Activated CD4-positive, alpha-beta T cell treated with anti-CD3 and anti-CD28 coated beads, Interleukin-2, amount 10 ng/mL, durations not matched to agents 24 days and 14 days (primary cell): ENCODE measurements at regions of chr21 and their contacts with region 1.

Region 1: DNA sequence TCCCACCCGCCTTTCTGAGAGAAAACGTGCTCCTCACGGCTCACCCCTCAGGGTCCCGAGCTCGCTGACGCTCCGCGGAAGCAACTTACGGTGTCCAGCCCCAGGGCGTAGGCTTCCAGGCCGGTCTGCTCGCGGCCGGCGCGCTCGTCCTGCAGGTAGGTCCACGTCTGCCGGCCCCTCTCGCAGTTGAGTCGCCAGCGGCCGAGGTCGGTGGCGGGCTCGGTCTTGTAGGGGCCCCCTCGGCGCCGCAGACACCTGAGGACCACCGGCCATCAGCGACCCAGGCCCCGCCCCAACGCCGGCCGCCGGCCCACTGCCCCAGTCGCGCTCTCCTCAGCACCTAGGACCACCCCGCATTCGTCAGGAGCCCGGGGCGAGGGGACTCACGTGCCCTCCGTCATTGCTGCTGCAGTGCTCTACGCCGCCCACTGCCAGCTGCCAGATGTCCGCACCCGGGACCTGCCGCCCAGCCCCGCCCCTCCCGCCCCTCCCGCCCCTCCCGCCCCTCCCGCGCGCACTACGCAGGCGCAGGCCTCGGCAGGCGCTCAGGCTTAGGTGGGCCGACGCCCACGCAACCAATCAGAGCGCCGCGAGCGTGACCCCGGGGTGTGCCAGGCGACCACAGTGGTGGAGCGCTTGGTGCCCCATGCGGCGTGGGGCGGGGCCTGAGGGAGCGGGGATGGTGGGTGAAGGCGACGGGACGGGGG is at the start of gene LSS:
- DNase-seq: peak; percentile 99
- H3K4me3 Mint-ChIP-seq: peak within 1 kb of the TSS; percentile 94
- H3K27ac Mint-ChIP-seq: peak within 1 kb of the TSS; percentile 100
- H3K4me1 Mint-ChIP-seq: peaks cover 51% of the 10 kb centered on the region
- H3K27me3 Mint-ChIP-seq: no peaks in the 10 kb centered on the region
- total RNA-seq, gene LSS: 19.7 and 23.1 TPM in 2 replicates

Region 2: GRCh38 chr21:45973659-45974072 is 254.8 kb before region 1 on chr21:
- intact Hi-C with region 1: loop called (anchors 5 kb)
- DNase-seq: peak; percentile 92
- H3K4me3 Mint-ChIP-seq: peak overlapping the region; percentile 80
- H3K27ac Mint-ChIP-seq: no peak overlapping the region
- H3K4me1 Mint-ChIP-seq: peaks cover 11% of the 10 kb centered on the region
- H3K27me3 Mint-ChIP-seq: peaks cover 27% of the 10 kb centered on the region

Region 3: DNA sequence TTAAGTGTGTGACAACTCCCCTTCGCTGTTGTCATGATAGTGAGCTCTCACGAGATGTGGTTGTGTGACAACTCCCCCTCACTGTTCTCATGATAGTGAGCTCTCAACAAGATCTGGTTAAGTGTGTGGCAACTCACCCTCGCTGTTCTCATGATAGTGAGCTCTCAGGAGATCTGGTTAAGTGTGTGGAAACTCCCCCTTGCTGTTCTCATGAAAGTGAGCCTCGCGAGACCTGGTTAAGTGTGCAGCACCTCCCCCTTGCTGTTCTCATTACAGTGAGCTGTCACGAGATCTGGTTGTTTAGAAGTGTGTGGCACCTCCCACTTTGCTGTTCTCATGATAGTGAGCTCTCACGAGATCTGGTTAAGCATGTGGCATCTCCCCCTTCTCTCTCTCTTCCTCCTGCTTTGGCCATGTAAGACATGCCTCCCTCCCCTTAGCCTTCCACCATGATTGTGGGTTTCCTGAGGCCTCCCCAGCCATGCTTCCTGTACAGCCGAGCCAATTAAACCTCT is 25.2 kb after region 1 on chr21:
- intact Hi-C with region 1: loop called (anchors 2 kb)
- DNase-seq: peak; percentile 89
- H3K4me3 Mint-ChIP-seq: peak overlapping the region; percentile 61
- H3K27ac Mint-ChIP-seq: peak overlapping the region; percentile 91
- H3K4me1 Mint-ChIP-seq: peaks cover 29% of the 10 kb centered on the region
- H3K27me3 Mint-ChIP-seq: no peaks in the 10 kb centered on the region

Region 4: GRCh38 chr21:46483300-46484295 is 255.1 kb after region 1 on chr21:
- intact Hi-C with region 1: no loop called
- DNase-seq: no peak
- H3K4me3 Mint-ChIP-seq: no peak overlapping the region
- H3K27ac Mint-ChIP-seq: no peak overlapping the region
- H3K4me1 Mint-ChIP-seq: peaks cover 10% of the 10 kb centered on the region
- H3K27me3 Mint-ChIP-seq: no peaks in the 10 kb centered on the region